ENCODE measurements at regions of chr16 and their contacts with region 1.

Region 1: DNA sequence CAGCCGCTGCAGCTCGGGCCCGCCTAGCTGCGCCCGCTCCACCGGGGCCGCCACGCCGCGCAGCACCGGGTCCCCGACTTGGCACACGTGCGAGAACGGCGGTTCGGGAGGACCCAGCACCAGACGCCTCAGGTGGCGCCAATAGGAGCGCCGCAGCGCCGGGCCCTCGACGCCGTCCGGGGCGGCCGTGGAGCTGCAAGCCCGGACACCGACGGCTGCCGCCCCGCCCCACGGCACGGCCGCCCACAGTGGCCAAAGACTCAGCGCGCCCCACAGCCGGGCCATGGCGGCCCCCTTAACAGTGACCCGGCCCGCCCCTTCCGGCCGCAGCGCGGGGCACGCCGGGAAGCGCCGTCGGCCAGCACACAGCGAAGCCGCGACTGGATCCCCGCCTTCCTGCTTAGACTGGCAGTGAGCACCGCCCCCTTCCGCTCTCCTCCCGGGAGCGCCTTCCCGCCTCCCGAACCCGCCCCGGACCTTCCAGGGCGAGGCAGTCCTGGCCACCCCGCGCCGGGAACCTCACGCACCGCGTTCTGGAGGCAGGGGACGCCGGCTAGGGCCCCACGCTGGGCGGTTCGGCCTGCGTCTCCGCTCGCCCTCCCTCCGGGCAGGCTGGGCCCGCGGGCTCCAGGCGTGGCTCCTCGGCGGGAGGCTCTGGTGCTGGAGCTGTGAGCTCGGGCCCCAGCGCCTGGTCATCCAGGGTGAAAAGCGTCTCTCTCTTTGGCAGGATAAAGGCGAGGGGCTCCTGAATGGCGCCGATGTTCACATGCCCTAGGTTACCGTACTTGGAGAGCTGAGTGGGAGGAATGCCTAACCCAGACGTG is at the start of gene PDF:
- DNase-seq: peak; percentile 75 to 85 (median 77)
- H3K4me3 ChIP-seq: peak within 1 kb of the TSS; percentile 71 to 87 (median 81)
- H3K27ac ChIP-seq: peak within 1 kb of the TSS; percentile 33 to 83
- H3K4me1 ChIP-seq: peaks cover 0 to 48% (median 30%) of the 10 kb centered on the region in 4 experiments
- H3K27me3 ChIP-seq: no peaks in the 10 kb centered on the region

Region 2: DNA sequence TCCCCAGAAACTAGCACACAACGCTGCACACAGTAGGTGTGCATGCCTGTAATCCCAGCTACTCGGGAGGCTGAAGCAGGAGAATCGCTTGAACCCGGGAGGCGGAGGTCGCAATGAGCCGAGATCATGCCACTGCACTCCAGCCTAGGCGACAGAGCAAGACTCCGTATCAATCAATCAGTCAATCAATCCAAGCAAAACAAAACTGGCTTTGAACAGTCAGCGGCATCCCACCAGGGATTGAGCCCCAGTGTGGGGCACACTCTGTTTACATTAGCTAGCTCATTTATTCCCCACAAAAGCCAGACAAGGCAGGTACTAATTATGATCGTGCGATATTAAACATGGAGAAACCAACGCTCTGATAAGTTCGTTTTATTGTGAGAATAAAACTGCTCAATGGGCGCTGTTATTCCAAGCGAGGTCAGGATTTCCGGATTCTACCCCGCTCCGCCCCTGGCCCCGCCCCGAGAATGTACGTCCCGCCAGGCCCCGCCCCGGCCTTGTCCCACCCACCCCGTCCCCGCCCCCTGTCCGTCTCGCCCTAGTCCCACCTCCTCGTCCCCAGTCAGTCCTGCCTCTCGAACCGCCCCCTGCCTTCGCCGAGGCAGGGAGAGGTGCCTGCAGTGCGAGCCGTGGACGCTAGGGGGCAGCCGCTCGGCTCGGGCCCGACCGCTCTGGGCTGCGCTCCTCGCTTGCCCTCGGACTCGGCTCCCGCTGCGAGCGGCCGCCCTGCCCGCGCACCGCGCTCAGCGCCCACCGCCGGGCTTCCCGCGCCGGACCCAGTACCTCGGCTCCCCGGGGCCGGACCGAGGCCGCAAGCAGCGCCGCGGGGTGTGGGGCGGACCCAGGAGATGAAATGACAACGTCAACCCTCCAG is 19.6 kb before region 1 on chr16 and contains the start of gene VPS4A:
- CTCF ChIA-PET with region 1: interaction called, 28 read pairs
- POLR2A ChIA-PET with region 1: interaction called, 3 read pairs
- DNase-seq: peak; percentile 94 to 97 (median 97)
- H3K4me3 ChIP-seq: peak within 1 kb of the TSS; percentile 78 to 95 (median 87)
- H3K27ac ChIP-seq: peak within 1 kb of the TSS; percentile 61 to 87
- H3K4me1 ChIP-seq: peaks cover 3 to 12% (median 8%) of the 10 kb centered on the region in 4 experiments
- H3K27me3 ChIP-seq: no peaks in the 10 kb centered on the region

Measured in common myeloid progenitor, CD34-positive (primary cell).